Mammary epithelial cell (primary cell): ENCODE measurements at regions of chr1 and their contacts with region 1.

Region 1: DNA sequence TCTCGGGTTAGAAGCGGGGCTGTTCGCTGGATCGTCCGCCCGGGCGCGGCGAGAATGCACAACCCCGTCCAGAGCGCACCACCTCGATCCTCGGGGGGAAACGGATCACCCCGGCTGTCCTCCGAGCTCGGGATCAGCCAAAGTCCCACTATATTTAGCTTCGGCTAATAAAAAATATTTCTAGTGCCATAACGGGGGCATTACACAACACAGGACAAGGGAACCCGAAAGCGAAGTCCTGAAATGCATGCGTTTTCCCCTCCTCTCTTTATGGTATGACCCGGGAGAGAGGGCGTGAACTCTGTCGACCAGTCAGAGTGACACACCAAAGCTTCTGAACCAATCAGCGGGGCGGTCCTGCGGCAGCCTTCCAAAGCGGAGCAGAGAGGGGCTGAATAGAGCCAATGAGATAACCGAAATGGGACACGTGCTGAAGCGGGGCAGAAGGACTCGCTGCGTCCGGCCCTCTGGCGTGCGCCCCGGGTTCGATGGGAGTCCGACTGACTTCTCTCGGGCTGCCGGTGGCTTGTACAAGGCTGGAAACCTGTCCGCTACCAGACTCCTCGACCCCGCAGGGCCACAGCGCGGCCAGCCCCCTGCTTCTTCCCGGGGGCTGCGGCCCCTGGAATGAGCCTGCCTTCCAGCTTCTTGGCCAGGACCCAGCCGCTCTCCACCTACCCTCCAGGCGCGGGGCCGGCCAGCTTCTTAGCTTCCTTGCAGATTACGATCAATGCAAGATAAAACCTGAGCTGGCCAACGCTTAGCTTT is at the start of gene ALDH4A1:
- DNase-seq: peak; percentile 98
- H3K4me3 ChIP-seq: peak within 1 kb of the TSS; percentile 74 to 79 (median 77)
- H3K27ac ChIP-seq: peak within 1 kb of the TSS; percentile 88
- H3K4me1 ChIP-seq: peaks cover 38% of the 10 kb centered on the region
- H3K27me3 ChIP-seq: no peaks in the 10 kb centered on the region
- CTCF ChIP-seq: peak in 1 of 2 donors; percentile 10
- total RNA-seq, gene ALDH4A1: 24.0 to 41.4 TPM

Region 2: DNA sequence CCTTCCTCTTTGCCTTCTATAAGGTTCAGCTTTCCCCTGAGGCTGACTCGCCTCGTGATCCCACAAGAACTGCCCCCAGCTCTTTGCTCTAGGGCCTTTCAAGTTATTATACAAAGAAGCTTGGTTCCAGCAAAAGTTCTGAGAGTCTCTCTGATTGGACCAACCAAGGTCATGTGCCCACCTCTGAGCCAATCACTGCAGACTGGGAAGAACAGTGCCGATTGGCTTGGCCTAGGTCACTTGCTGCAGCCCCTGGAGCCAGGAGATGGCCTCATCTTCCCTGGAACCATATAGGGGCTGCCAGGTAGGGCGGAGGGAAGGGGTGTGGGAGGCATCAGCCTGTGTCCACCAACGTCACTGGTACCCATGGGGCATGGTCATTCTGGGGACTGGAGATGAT is 66.1 kb before region 1 on chr1:
- CTCF ChIA-PET with region 1: no interaction called
- dilution Hi-C with region 1: no loop called
- in situ Hi-C with region 1: no loop called
- intact Hi-C with region 1: no loop called
- DNase-seq: no peak
- H3K4me3 ChIP-seq: no peak overlapping the region
- H3K27ac ChIP-seq: no peak overlapping the region
- H3K4me1 ChIP-seq: no peaks in the 10 kb centered on the region
- H3K27me3 ChIP-seq: no peaks in the 10 kb centered on the region
- CTCF ChIP-seq: no peak

Region 3: DNA sequence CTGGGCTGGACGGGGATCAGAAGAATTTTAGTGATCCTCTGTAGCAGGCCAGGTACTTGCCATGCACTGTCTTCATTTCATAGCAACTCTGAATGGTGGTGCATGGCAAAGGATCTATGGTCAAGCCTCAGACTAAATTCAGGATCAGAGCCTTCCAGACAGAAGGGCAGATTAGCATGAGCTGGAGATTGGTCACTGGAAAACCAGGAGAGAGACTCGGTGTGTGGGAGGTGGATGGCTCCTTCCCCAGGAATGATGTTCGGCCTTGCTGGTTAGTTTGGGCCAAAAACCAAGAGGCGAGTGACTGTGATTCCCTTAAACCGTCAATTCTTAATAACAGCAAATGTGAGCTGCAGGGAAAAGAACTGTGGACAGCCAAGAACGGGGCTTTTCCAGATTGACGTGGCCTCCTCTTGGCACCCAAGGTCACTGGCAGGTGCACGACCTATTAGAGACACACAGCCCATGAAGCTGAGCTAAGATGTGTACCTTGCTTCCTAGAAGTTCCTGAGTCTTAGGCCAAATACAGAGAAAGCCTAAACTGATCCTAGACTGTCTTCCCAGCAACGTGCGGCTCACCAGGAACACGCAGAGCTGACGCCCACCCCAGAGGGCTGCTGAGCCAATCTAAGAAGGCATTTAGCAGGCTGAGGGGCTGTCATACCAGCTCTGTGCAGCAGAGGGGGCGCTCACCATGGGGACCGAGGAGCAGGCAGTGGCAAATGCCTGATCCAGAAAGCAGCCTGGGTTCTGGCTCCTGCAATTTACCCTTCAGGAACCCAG is 18.9 kb before region 1 on chr1:
- CTCF ChIA-PET with region 1: interaction called, 10 read pairs
- dilution Hi-C with region 1: no loop called
- in situ Hi-C with region 1: no loop called
- intact Hi-C with region 1: loop called (anchors 1 kb)
- DNase-seq: peak; percentile 47
- H3K4me3 ChIP-seq: no peak overlapping the region
- H3K27ac ChIP-seq: no peak overlapping the region
- H3K4me1 ChIP-seq: peaks cover 29% of the 10 kb centered on the region
- H3K27me3 ChIP-seq: no peaks in the 10 kb centered on the region
- CTCF ChIP-seq: peak; percentile 93 to 95

Region 4: DNA sequence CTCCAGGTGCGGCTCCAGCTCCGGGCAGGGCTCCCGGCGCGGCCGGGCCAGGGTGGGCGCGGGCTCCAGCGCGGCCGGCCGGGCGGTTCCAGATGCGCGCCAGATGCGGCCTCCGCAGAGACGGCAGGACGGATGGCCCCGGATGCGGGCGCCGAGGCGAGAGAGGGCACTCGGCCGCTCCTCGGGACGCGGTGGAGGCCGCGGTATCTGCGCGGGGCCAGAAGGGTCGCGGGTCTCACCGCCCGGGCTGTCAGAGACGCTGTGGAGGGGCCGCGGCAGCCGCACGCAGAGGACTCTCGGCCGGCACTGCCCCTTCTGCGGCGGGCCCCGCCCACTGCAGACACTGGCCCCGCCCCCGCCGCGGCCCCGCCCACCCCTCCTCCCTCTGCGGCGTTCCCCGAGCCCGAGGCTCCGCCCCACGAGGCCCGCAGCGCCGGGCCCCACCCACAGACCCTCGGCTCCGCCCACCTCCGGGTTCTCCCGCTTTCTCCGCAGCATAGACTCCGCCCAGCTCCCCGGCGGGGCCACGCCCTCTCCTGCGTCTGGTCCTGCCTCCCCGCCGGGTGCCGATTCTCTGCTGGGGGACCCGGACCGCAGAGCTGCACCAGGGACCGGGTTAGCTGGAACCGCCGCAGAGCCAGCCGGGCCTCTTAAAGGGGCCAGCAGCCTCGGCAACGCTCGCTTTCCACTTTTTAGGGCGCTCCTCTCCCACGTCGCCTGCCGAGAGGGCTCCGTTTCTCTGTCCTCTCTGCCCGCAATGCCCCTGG is 53.8 kb after region 1 on chr1 and contains the start of gene IFFO2:
- CTCF ChIA-PET with region 1: no interaction called
- dilution Hi-C with region 1: loop called (anchors 5 kb)
- in situ Hi-C with region 1: loop called in 1 of 2 experiments (anchors 10 kb)
- intact Hi-C with region 1: loop called (anchors 2 kb)
- DNase-seq: peak; percentile 91
- H3K4me3 ChIP-seq: peak within 1 kb of the TSS; percentile 76 to 93 (median 88)
- H3K27ac ChIP-seq: peak within 1 kb of the TSS; percentile 92
- H3K4me1 ChIP-seq: peaks cover 33% of the 10 kb centered on the region
- H3K27me3 ChIP-seq: no peaks in the 10 kb centered on the region
- CTCF ChIP-seq: no peak
- total RNA-seq, gene IFFO2: 94.8 to 304 TPM

Region 5: DNA sequence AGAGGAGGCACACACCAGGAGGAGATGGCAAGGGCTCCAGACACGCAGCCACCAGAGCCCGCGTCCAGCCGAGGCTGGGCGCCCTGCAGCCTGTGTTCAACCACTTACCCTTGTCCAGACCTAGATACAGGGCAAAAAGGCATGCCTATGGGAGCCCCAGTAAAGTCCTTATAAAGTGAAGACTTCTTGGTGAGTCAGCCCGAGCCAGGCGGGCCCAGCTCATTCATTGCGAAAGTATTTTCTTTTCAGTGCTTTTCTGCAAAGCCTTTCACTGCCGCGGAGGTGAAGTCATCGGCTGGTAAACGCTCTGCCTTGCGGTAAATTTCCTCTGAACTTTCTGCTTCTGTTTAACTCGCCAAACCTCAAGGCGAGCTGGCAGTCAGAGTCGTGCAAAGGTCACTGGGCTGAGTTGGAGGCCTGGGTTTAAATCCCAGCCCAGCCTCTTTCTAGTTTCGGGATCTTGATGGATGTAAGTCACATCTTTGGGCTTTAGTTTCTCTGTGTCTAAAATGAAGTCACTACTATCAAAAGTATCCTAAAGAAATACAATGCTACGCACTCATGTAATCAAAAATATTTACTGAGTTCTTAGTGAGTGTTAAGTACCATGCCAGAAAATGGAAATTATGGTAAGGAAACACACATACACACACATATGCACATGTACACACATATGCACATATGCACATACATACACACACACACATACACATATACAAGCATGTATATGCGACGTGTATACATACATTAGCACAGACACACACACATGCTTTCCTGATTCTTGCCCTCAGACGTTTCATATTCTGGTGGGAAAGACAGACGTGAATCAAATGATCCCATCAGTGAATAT is 108.5 kb after region 1 on chr1:
- CTCF ChIA-PET with region 1: no interaction called
- dilution Hi-C with region 1: loop called (anchors 5 kb)
- in situ Hi-C with region 1: no loop called
- intact Hi-C with region 1: no loop called
- DNase-seq: peak; percentile 98
- H3K4me3 ChIP-seq: no peak overlapping the region
- H3K27ac ChIP-seq: peak overlapping the region; percentile 71
- H3K4me1 ChIP-seq: peaks cover 33% of the 10 kb centered on the region
- H3K27me3 ChIP-seq: no peaks in the 10 kb centered on the region
- CTCF ChIP-seq: no peak

Region 6: DNA sequence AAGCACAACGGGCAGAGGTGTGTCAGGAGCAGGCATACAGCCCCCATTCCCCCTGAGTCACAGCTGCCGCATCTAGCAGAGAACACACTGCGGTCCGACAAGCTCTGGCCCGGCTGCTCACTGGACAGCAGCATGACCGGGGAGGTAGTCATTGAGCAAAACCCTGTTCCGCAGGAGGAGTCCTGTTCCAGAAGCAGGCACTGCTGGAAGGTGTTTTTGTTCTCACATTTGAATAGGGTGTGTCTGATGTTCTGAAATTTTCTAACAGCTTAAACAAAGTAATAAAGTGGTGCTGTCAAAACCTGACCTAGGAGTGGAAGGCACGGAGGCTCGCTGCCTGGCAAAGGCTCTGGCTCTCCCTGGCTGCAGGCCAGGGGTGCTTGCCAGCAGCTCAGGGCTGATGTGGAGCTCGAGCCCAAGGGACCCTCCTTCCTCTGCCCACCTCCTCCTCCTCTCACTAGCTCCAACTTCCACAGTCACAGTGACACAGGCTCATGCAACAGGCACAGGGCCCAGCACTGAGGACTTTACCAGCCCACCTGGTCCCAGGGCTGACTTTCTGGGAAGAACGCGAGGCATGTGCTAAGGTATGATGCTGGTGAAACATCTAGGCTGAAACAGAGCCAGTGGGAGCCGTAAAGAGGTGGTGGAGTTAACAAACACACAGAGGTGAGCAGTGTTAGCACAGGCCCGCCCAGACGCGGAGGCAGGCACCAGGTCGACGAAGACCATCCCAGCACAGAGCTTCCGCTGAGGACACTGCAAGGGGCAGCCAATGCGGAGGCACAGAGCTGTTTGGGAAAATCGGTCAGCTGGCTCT is 172.4 kb after region 1 on chr1:
- CTCF ChIA-PET with region 1: no interaction called
- dilution Hi-C with region 1: loop called (anchors 5 kb)
- in situ Hi-C with region 1: loop called (anchors 10 kb)
- intact Hi-C with region 1: loop called (anchors 1 kb)
- DNase-seq: peak; percentile 97
- H3K4me3 ChIP-seq: no peak overlapping the region
- H3K27ac ChIP-seq: peak overlapping the region; percentile 71
- H3K4me1 ChIP-seq: peaks cover 48% of the 10 kb centered on the region
- H3K27me3 ChIP-seq: no peaks in the 10 kb centered on the region
- CTCF ChIP-seq: no peak

Region 7: DNA sequence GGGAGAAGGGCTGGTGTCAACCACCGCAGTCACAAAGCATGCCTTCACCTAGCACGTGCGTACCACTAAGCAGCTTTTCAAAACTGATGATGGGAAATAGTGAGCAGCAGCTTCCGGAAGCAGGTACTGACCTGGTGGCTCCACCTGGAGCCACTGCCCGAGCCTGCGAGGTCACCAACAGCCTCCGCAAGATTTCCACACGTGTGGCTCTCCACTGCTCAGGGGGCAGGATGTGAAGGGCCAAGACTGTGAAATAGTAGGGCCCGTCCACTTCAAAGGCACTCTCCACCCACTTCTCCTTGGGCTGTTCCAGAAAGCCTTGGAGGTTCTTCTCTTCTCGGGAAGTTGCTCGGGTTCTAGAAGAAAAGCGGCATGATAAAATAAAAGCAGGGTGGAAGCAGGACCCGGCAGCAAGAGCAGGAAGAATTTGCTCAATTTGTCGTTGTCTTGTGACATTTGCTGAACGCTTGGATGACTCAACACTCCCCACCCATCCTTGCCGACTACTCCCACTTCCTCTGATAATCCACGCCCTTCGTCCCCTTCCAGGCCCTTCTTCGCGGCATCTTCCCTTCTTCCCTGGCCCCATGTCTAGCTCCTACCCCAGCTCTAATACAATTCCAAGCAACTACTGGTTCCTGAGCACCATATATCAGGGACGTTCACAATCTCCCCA is 178.6 kb after region 1 on chr1:
- CTCF ChIA-PET with region 1: no interaction called
- dilution Hi-C with region 1: loop called (anchors 5 kb)
- in situ Hi-C with region 1: loop called (anchors 10 kb)
- intact Hi-C with region 1: no loop called
- DNase-seq: no peak
- H3K4me3 ChIP-seq: no peak overlapping the region
- H3K27ac ChIP-seq: no peak overlapping the region
- H3K4me1 ChIP-seq: peaks cover 35% of the 10 kb centered on the region
- H3K27me3 ChIP-seq: no peaks in the 10 kb centered on the region
- CTCF ChIP-seq: no peak

Region 8: GRCh38 chr1:19113697-19114092 is 211.0 kb after region 1 on chr1:
- CTCF ChIA-PET with region 1: no interaction called
- dilution Hi-C with region 1: no loop called
- in situ Hi-C with region 1: no loop called
- intact Hi-C with region 1: no loop called
- DNase-seq: peak; percentile 50
- H3K4me3 ChIP-seq: no peak overlapping the region
- H3K27ac ChIP-seq: no peak overlapping the region
- H3K4me1 ChIP-seq: no peaks in the 10 kb centered on the region
- H3K27me3 ChIP-seq: no peaks in the 10 kb centered on the region
- CTCF ChIP-seq: peak; percentile 47 to 53